Endothelial cell of umbilical vein (primary cell): ENCODE measurements at regions of chr2 and their contacts with region 1.

Region 1: DNA sequence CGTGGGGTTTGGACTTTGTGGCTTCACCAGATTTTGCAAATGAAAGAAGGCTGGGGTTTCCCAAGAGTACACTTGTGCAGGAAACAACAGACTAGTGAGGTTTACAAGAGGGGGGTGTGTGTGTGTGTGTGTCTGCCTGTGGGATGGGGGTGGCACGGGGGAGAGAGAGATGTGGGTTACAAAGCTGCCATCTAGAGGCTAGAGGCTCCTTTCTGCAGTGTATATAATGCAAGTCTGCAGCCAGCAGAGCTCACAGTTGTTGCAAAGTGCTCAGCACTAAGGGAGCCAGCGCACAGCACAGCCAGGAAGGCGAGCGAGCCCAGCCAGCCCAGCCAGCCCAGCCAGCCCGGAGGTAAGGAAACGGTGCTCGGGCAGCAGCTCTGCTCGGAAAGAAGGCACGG is at the start of gene ACKR3:
- DNase-seq: peak; percentile 95
- H3K4me3 ChIP-seq: peak within 1 kb of the TSS; percentile 18 to 70 (median 58)
- H3K27ac ChIP-seq: peak within 1 kb of the TSS; percentile 46
- H3K4me1 ChIP-seq: peaks cover 52% of the 10 kb centered on the region
- H3K27me3 ChIP-seq: no peaks in the 10 kb centered on the region
- CTCF ChIP-seq: peak; percentile 55 to 69
- POLR2A ChIP-seq: peak; percentile 87
- total RNA-seq, gene ACKR3: 24.0 and 31.1 TPM in 2 replicates

Region 2: GRCh38 chr2:236352761-236353593 is 216.6 kb before region 1 on chr2:
- CTCF ChIA-PET with region 1: interaction called, 13 read pairs
- POLR2A ChIA-PET with region 1: no interaction called
- dilution Hi-C with region 1: no loop called
- intact Hi-C with region 1: loop called (anchors 1 kb)
- DNase-seq: peak; percentile 44
- H3K4me3 ChIP-seq: no peak overlapping the region
- H3K27ac ChIP-seq: no peak overlapping the region
- H3K4me1 ChIP-seq: no peaks in the 10 kb centered on the region
- H3K27me3 ChIP-seq: no peaks in the 10 kb centered on the region
- CTCF ChIP-seq: peak; percentile 60 to 61
- POLR2A ChIP-seq: no peak

Region 3: GRCh38 chr2:236512902-236513435 is 56.6 kb before region 1 on chr2:
- CTCF ChIA-PET with region 1: interaction called, 49 read pairs
- POLR2A ChIA-PET with region 1: interaction called, 3 read pairs
- dilution Hi-C with region 1: no loop called
- intact Hi-C with region 1: loop called (anchors 1 kb)
- DNase-seq: peak; percentile 42
- H3K4me3 ChIP-seq: no peak overlapping the region
- H3K27ac ChIP-seq: no peak overlapping the region
- H3K4me1 ChIP-seq: peaks cover 18% of the 10 kb centered on the region
- H3K27me3 ChIP-seq: no peaks in the 10 kb centered on the region
- CTCF ChIP-seq: peak; percentile 77 to 78
- POLR2A ChIP-seq: no peak

Region 4: DNA sequence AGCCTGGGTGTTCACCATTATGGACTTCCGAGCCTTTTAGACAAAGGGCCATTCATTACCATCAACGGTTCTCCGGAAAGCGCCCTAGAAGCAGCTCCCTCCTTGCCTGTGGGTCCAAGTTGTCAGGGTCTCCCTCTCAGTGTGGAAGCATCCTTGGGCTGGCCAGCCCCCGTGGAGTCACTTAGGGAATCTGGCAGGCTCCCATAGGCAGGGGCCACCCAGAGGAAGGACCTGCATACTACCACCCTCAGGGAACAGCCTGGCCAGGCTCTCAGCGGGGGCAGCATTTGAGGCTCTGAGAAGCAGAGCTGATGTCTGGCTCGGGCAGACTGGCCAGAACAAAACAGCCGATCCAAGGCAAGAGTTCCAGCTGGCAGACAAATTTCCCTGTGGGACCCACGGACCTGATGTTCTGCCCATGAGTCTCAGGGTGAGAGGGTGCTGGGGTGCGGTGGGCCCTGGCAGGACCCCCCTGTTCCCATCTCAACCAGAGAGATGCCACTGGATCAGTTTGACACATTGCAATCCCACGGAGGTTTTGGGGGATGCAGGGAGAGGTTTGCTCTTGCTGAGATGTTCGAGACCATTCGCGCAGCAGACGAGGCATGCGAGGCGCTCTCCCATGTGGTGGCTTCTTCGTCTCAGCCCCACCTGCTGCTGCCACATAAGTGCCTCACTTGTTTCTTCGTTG is 57.0 kb after region 1 on chr2:
- CTCF ChIA-PET with region 1: no interaction called
- POLR2A ChIA-PET with region 1: no interaction called
- dilution Hi-C with region 1: no loop called
- intact Hi-C with region 1: no loop called
- DNase-seq: no peak
- H3K4me3 ChIP-seq: no peak overlapping the region
- H3K27ac ChIP-seq: no peak overlapping the region
- H3K4me1 ChIP-seq: no peaks in the 10 kb centered on the region
- H3K27me3 ChIP-seq: no peaks in the 10 kb centered on the region
- CTCF ChIP-seq: no peak
- POLR2A ChIP-seq: no peak

Region 5: GRCh38 chr2:236833501-236834073 is 264.0 kb after region 1 on chr2:
- CTCF ChIA-PET with region 1: no interaction called
- POLR2A ChIA-PET with region 1: no interaction called
- dilution Hi-C with region 1: no loop called
- intact Hi-C with region 1: loop called (anchors 2 kb)
- DNase-seq: peak; percentile 95
- H3K4me3 ChIP-seq: no peak overlapping the region
- H3K27ac ChIP-seq: peak overlapping the region; percentile 94
- H3K4me1 ChIP-seq: peaks cover 23% of the 10 kb centered on the region
- H3K27me3 ChIP-seq: no peaks in the 10 kb centered on the region
- CTCF ChIP-seq: no peak
- POLR2A ChIP-seq: no peak

Region 6: GRCh38 chr2:237072067-237072931 is 502.7 kb after region 1 on chr2:
- CTCF ChIA-PET with region 1: interaction called, 13 read pairs
- POLR2A ChIA-PET with region 1: no interaction called
- dilution Hi-C with region 1: no loop called
- intact Hi-C with region 1: loop called (anchors 2 kb)
- DNase-seq: peak; percentile 72
- H3K4me3 ChIP-seq: no peak overlapping the region
- H3K27ac ChIP-seq: no peak overlapping the region
- H3K4me1 ChIP-seq: peaks cover 38% of the 10 kb centered on the region
- H3K27me3 ChIP-seq: no peaks in the 10 kb centered on the region
- CTCF ChIP-seq: peak; percentile 88
- POLR2A ChIP-seq: no peak